ENCODE measurements at regions of chr9 and their contacts with region 1.

Region 1: DNA sequence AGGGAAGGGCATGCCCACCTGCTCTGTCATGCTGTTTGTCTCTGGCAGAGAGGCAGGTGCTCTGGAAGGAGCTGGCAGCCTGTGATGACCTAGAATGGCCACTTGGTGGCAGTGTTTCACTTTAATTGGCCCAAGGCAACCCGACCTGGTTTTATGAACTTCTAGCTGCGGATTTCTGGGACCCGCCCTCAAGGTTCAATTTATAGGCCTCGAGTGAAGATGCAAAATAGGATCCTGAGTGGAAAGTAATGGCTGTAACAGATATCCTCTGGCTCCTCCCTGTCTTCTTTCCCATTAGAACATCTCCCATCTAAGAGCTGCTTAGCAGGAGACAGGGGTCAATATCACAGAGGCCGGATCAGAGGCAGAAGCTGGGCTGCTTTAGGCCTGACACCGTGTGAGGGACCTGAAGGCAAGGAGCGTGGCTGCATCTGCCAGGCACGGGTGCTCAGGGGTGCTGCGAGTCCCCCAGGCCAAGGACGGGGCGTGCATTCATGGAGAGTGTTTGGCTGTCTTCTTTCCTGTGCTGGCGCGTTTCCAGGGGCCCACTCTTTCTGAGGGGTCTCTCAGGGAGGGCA is 56.7 kb upstream of the SLC28A3 start:
- DNase-seq: no peak
- H3K4me3 ChIP-seq: no peak overlapping the region
- H3K27me3 ChIP-seq: no peaks in the 10 kb centered on the region
- CTCF ChIP-seq: peak; percentile 82

Region 2: DNA sequence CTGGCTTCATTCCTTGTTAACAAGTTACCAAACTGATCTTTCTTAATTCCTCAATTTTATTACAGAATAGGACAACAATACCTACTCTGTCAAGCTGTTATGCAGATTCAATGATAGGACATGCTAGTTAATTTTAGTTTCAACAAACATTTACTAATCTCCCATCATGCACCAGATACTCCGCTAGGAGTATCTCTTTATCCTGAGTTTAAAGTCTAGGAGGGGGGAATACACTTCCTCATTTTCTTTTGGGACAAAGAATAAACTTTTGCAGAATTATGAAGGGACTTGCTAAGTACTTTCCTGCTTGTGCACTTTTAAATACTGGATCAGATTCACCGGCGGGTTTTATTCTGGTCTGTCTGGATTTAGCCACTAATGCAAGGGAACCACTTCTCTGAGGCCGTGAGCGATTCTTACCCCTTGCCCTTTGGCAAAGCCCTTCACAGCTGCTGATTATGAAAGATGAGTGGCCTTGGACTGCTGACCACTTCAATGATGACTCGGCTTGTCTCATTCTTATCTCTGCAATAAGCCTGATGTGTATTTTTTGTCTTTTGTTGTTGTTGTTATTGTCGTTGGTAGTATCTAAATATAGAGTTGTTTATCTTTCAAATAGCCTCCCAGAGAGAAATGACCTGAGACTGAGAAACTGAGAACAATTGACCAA is 342.8 kb before region 1 on chr9:
- CTCF ChIA-PET with region 1: no interaction called
- POLR2A ChIA-PET with region 1: no interaction called
- DNase-seq: no peak
- H3K4me3 ChIP-seq: no peak overlapping the region
- H3K27me3 ChIP-seq: no peaks in the 10 kb centered on the region; the same call in 1 of the 2 replicates
- CTCF ChIP-seq: no peak

Region 3: GRCh38 chr9:84381508-84381907 is 15.7 kb before region 1 on chr9:
- CTCF ChIA-PET with region 1: interaction called, 28 read pairs
- POLR2A ChIA-PET with region 1: no interaction called
- DNase-seq: no peak
- H3K4me3 ChIP-seq: no peak overlapping the region
- H3K27me3 ChIP-seq: peaks cover 1% of the 10 kb centered on the region; the same call in 1 of the 2 replicates
- CTCF ChIP-seq: no peak

Region 4: DNA sequence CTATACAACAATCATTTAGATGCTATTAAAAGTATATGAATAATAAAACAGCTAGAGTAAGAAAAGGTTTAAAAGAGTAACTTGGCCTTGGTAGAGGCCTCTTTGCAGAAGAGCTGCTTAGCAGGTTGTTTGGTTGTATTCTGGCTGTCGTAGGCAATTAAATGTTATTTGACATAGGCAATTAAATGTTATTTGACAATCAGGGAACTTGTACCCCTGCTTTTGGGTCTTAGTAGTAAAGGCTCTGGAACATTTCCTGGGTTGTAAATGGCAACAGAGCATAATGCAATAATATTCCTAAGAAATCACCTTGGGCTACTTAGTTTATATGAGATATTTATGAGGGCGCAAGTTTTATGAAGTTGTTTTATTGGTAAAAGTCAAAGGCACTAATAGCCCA is 27.7 kb after region 1 on chr9:
- CTCF ChIA-PET with region 1: no interaction called
- POLR2A ChIA-PET with region 1: no interaction called
- DNase-seq: no peak
- H3K4me3 ChIP-seq: no peak overlapping the region
- H3K27me3 ChIP-seq: no peaks in the 10 kb centered on the region
- CTCF ChIP-seq: no peak

Region 5: DNA sequence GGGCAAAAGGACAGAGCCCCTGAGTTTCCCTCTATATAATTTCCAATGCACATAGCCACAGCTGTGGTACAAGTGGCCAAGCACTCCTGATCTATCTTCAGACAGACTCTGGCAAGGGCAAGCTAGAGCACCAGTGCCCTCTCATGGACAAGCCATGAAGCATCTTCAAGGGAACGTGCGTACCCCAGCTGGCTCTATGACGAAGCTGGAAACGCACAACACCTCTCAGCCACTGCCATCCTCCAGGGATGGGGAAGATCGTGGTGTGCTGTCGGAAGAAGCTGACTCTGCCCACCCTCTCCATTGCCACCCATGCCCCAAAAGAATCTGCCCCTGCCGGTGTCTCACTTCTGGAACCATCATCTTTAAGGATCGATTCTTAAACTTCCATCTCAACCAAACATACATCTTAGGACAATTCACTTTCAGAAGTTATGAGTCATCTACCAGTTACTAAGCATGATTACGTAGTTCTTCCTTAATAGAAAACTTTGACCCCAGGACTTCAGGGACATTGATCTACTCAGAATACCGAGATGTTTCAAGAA is 861.7 kb after region 1 on chr9:
- CTCF ChIA-PET with region 1: interaction called, 11 read pairs
- POLR2A ChIA-PET with region 1: no interaction called
- DNase-seq: peak; percentile 8
- H3K4me3 ChIP-seq: no peak overlapping the region
- H3K27me3 ChIP-seq: no peaks in the 10 kb centered on the region
- CTCF ChIP-seq: peak; percentile 66

Region 6: DNA sequence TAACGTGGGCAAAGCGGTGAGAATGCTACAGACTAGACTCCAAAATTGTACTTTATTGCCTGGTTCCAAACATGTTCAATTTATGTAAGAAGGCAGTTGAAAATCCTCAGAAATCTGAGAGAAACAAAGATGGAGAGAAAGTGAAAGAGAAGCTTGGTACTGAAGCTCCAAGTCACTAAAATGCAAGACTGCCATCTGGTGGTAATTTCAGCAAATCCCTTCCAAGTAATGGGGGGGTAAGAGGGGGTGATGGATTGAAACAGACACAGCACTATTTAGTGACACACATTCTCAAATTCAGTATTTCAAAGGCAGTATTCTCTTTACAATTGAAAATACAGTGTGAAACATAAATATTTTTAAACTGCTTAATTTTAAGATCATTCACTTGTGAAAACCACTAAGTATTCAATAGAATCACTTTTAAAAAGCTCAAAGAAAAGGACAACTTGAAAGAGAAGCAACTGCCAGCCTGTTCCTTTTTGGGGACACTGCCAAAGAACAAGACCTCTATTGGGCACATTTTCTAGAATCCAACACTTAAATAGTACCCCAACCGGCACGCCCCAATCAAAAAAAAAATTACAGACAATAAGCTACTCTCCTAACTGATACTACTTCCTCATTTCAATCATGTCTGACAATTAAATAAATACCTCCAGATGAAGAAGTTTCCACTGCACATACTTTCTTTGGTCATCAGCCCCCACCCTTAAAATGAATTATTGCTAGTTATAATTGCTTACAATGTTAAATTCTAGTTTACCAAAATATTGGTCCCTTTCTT is 1213.0 kb after region 1 on chr9:
- CTCF ChIA-PET with region 1: interaction called, 35 read pairs
- POLR2A ChIA-PET with region 1: no interaction called
- DNase-seq: peak; percentile 18
- H3K4me3 ChIP-seq: peak overlapping the region; percentile 1; the same call in 1 of the 2 replicates
- H3K27me3 ChIP-seq: no peaks in the 10 kb centered on the region
- CTCF ChIP-seq: peak; percentile 77

Measured in BJ (cell line).